Activated B cell treated with CpG ODN at 0.5 μM for 24 hours (primary cell): ENCODE measurements at regions of chr5 and their contacts with region 1.

Region 1: GRCh38 chr5:55691265-55692105 is 20.6 kb downstream of the SLC38A9 start:
- DNase-seq: no peak
- ATAC-seq: peak; percentile 58
- H3K4me3 Mint-ChIP-seq: no peak overlapping the region
- H3K27ac Mint-ChIP-seq: no peak overlapping the region
- H3K4me1 Mint-ChIP-seq: peaks cover 5% of the 10 kb centered on the region
- H3K27me3 Mint-ChIP-seq: no peaks in the 10 kb centered on the region
- CTCF ChIP-seq: peak; percentile 26

Region 2: DNA sequence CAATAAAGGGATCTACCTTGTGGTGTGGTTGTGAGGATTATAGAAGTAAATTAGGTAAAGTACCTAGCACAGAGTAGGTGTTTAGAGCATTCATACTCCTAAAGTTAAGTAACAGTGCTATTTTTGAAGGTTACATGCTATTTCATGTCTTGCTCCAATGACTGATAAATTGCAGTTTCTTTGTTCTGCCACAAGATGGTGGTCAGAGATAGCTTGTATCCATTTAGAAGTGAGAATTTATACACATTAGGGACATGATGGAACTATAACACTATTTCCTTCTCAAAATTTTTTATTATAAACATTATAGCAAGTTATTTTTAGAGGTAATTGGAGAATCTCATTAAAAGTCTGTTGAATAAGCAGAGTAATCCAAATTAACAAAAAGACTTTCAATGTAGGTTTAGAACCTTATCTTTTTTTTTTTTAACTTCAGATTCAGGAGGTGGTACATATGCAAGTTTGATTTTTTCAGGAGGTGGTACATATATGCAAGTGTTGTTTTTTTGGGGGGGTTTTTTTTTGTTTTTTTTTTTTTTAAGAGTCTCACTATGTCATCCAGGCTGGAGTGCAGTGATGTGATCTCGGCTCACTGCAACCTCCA is 366.6 kb before region 1 on chr5:
- CTCF ChIA-PET with region 1: interaction called, 5 read pairs
- POLR2A ChIA-PET with region 1: no interaction called
- intact Hi-C with region 1: loop called (anchors 1 kb)
- DNase-seq: no peak
- ATAC-seq: peak; percentile 56
- H3K4me3 Mint-ChIP-seq: no peak overlapping the region
- H3K27ac Mint-ChIP-seq: no peak overlapping the region
- H3K4me1 Mint-ChIP-seq: peaks cover 6% of the 10 kb centered on the region
- H3K27me3 Mint-ChIP-seq: no peaks in the 10 kb centered on the region
- CTCF ChIP-seq: no peak

Region 3: DNA sequence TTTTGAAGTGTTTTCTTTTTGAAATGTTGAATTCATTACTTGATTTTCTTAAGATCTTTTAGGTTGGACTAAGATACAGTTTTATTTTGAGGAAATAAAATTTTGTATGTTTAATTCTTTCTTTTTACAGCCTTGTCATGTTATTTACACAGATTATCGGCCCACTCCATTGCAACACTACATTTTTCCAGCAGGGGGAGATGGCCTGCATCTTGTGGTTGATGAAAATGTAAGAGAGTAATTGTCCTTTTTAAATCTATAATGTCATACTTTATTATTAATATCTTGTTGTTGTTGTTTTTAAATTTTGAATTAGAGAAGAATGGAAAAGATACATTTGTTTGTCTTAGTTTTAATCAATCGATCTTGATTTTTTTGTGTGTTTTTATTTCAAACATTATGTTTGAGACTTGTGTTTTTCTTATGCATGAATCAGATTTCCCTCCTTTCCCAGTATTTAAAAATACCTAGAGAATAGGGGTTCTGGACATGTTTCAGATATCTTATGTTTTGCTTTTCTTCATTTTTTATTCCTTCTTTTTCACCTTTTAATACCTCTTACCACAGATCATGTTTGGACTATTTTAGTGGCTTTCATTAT is 347.0 kb before region 1 on chr5:
- CTCF ChIA-PET with region 1: interaction called, 5 read pairs
- POLR2A ChIA-PET with region 1: interaction called, 3 read pairs
- intact Hi-C with region 1: loop called (anchors 1 kb)
- DNase-seq: no peak
- ATAC-seq: peak; percentile 52
- H3K4me3 Mint-ChIP-seq: no peak overlapping the region
- H3K27ac Mint-ChIP-seq: peak overlapping the region; percentile 41
- H3K4me1 Mint-ChIP-seq: peaks cover 3% of the 10 kb centered on the region
- H3K27me3 Mint-ChIP-seq: no peaks in the 10 kb centered on the region
- CTCF ChIP-seq: no peak

Region 4: GRCh38 chr5:55407059-55407684 is 284.3 kb before region 1 on chr5:
- CTCF ChIA-PET with region 1: interaction called, 11 read pairs
- POLR2A ChIA-PET with region 1: no interaction called
- intact Hi-C with region 1: loop called (anchors 1 kb)
- DNase-seq: no peak
- ATAC-seq: peak; percentile 37
- H3K4me3 Mint-ChIP-seq: no peak overlapping the region
- H3K27ac Mint-ChIP-seq: no peak overlapping the region
- H3K4me1 Mint-ChIP-seq: peaks cover 2% of the 10 kb centered on the region
- H3K27me3 Mint-ChIP-seq: no peaks in the 10 kb centered on the region
- CTCF ChIP-seq: no peak